Spleen (tissue), 13 donors: ENCODE measurements at regions of chr20 and their contacts with region 1.

Region 1: GRCh38 chr20:23050847-23051631 is 1.6 kb upstream of the THBD start:
- DNase-seq: peak; percentile 91
- H3K4me3 ChIP-seq: peak overlapping the region; percentile 42 to 77 (median 57)
- H3K27ac ChIP-seq: peak overlapping the region; percentile 88 to 96 (median 91)
- H3K4me1 ChIP-seq: peaks cover 0 to 58% (median 39%) of the 10 kb centered on the region in 6 donors
- H3K27me3 ChIP-seq: peaks cover 0 to 79% (median 29%) of the 10 kb centered on the region in 7 donors
- CTCF ChIP-seq: peak; percentile 16 to 83 (median 68)
- POLR2A ChIP-seq: peak in 1 of 3 donors; percentile 19

Region 2: DNA sequence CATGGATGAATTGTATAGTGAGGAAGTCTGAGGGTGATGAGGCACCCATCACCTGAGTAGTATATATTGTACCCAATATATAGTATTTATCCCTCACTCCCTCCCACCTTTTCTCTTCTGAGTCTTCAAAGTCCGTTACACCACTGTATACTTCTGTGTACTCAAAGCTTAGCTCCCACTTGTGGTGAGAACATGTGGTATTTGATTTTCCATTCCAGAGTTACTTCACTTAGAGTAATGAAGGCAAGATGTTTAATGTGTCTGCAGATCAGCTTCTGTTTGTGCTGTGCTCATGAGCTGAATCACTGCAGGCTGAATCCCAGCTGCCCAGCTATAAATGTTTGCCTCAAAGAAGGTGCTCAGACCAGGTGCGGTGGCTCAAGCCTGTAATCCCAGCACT is 327.4 kb before region 1 on chr20:
- intact Hi-C with region 1: no loop called
- DNase-seq: no peak
- H3K4me3 ChIP-seq: no peak overlapping the region
- H3K27ac ChIP-seq: peak overlapping the region in 1 of 8 donors; percentile 28
- H3K4me1 ChIP-seq: peaks cover 0 to 25% (median 8%) of the 10 kb centered on the region in 6 donors
- H3K27me3 ChIP-seq: no peaks in the 10 kb centered on the region
- CTCF ChIP-seq: no peak
- POLR2A ChIP-seq: no peak

Region 3: DNA sequence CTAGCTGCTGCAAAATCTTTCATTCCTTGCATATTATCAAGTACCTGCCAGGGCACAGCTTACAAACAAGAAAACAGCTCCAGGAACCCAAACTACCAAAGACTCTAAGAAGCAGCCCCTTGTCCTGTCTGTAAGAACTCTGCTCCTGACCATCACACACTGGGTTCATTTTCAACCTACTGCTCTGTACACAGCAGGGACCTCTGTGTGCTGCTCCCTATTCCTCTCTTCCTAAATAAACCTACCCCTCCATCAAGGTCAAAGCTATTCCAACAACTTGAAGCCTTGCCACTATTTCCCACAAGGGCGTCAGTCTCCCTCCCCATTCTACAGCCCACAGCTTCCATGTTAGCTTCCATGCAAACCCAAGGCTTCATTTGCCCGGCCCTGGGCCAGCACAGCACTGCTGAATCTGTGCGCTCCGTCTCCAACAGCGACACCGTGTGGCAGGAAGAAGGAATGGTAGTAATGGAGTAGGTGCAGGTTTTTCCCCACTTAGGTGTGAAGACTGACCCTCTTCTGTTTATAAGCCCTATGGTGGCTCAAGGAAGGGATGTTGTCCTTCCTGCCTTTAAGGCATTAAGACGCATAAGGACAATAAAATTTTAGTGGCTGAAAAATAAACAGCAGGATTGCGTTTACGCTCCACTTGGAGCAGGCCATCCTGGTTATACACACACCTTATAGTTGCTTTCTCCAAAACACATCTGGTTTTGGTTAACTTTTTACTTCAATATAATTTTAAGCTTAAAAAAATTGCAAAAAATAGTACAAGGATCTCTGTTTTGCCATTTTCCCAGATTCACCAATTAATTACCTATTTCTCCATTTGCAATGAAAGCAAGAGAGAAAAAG is 184.4 kb after region 1 on chr20:
- intact Hi-C with region 1: loop called (anchors 10 kb)
- DNase-seq: peak; percentile 89
- H3K4me3 ChIP-seq: no peak overlapping the region
- H3K27ac ChIP-seq: no peak overlapping the region
- H3K4me1 ChIP-seq: peaks cover 0 to 3% (median 0%) of the 10 kb centered on the region in 6 donors
- H3K27me3 ChIP-seq: peaks cover 0 to 4% (median 0%) of the 10 kb centered on the region in 7 donors
- CTCF ChIP-seq: peak; percentile 49 to 88 (median 72)
- POLR2A ChIP-seq: no peak